IMR-90 (cell line): ENCODE measurements at regions of chr3 and their contacts with region 1.

Region 1: GRCh38 chr3:94269763-94270162 is 206.9 kb downstream of the NSUN3 start:
- DNase-seq: no peak
- ATAC-seq: no peak; the same call in 1 of the 2 replicates
- H3K4me3 ChIP-seq: no peak overlapping the region
- H3K27ac ChIP-seq: no peak overlapping the region
- H3K4me1 ChIP-seq: no peaks in the 10 kb centered on the region
- H3K27me3 ChIP-seq: no peaks in the 10 kb centered on the region
- CTCF ChIP-seq: no peak
- POLR2A ChIP-seq: no peak
- RAD21 ChIP-seq: no peak

Region 2: DNA sequence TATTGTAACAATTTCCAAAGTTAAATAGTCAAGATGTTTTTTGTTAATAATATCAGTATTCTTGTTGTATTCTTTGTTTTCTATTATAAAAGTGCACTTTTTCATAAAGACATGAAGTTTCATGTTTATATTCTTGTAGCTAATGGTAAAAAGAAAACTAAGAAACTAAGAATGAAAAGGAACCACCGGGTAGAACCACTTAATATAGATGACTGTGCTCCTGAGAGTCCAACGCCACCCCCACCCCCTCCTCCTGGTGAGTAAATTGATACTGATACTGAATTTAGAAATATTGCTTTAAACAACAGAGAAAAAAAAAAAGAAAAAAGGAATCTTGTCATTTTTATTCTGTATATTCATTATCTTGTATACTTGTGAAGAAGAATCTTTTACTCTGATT is 220.5 kb before region 1 on chr3:
- CTCF ChIA-PET with region 1: no interaction called
- POLR2A ChIA-PET with region 1: no interaction called
- dilution Hi-C with region 1: no loop called
- in situ Hi-C with region 1: no loop called
- intact Hi-C with region 1: no loop called
- DNase-seq: no peak
- ATAC-seq: no peak
- H3K4me3 ChIP-seq: no peak overlapping the region
- H3K27ac ChIP-seq: no peak overlapping the region
- H3K4me1 ChIP-seq: no peaks in the 10 kb centered on the region
- H3K27me3 ChIP-seq: no peaks in the 10 kb centered on the region
- CTCF ChIP-seq: no peak
- POLR2A ChIP-seq: no peak
- RAD21 ChIP-seq: no peak

Region 3: GRCh38 chr3:94061297-94061696 is 208.5 kb before region 1 on chr3:
- CTCF ChIA-PET with region 1: no interaction called
- POLR2A ChIA-PET with region 1: no interaction called
- dilution Hi-C with region 1: no loop called
- in situ Hi-C with region 1: no loop called
- intact Hi-C with region 1: no loop called
- DNase-seq: no peak
- ATAC-seq: no peak
- H3K4me3 ChIP-seq: no peak overlapping the region
- H3K27ac ChIP-seq: no peak overlapping the region
- H3K4me1 ChIP-seq: peaks cover 1% of the 10 kb centered on the region; the same call in 1 of the 2 replicates
- H3K27me3 ChIP-seq: no peaks in the 10 kb centered on the region
- CTCF ChIP-seq: no peak
- POLR2A ChIP-seq: no peak
- RAD21 ChIP-seq: no peak

Region 4: DNA sequence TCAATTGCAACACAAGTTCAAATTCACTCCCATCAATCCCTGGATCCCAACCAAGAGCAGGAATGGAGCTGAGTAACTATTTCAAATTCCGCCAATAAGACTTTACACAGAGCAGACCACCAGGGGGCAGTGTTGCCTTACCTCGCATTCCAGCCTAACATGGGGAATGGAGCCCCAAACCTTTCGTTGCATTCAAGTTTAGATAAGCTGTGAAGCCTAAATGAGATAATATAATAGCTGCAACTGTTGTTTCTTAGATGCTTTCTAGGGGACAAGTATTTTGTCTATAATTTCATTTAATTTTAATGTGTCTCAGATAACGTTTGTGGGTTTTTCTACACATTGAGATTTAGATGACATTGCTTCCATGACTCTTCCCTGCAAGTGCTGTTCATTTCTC is 20.2 kb before region 1 on chr3:
- CTCF ChIA-PET with region 1: interaction called, 17 read pairs
- POLR2A ChIA-PET with region 1: no interaction called
- dilution Hi-C with region 1: no loop called
- in situ Hi-C with region 1: no loop called
- intact Hi-C with region 1: no loop called
- DNase-seq: peak; percentile 65
- ATAC-seq: peak; percentile 67; the same call in 1 of the 2 replicates
- H3K4me3 ChIP-seq: no peak overlapping the region
- H3K27ac ChIP-seq: no peak overlapping the region
- H3K4me1 ChIP-seq: no peaks in the 10 kb centered on the region
- H3K27me3 ChIP-seq: no peaks in the 10 kb centered on the region
- CTCF ChIP-seq: peak; percentile 77
- POLR2A ChIP-seq: no peak
- RAD21 ChIP-seq: peak; percentile 74